Activated CD4-positive, alpha-beta T cell treated with anti-CD3 and anti-CD28 coated beads for 36 hours (primary cell): ENCODE measurements at regions of chr9 and their contacts with region 1.

Region 1: DNA sequence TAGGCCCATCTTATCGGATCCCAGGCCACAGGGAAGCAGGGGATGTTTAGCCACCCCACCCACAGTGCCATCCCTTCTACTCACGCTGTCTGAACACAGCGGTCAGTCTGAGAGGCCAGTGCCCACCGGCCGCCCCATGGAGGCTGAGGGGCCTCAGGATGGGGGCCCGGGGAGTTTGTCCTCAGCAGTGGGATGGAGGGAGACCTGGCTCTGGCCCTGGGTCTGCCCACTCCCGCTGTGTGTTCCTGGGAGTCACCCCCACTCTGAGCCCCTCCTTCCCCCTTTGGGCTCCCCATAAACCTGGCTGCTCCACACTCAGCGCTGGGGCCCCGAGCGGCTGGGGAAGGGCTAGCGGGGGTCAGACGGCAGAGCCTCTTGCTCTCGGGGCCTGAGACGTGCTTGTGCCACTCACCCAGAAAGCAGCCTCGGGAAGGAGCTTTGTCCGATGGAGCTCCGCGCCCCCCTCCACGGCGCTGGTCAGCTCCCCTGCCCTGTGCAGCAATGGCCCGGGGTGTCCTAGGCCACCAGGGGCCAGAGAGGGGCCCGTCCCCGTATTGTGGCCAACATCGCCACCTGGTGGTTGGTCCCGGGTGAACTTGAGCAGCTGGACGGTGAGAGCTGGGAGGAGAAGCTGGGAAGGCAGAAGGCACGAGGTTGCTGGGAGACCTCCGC is 10.9 kb upstream of the LAMC3 start:
- DNase-seq: peak; percentile 80
- ATAC-seq: peak; percentile 63
- H3K4me3 Mint-ChIP-seq: no peak overlapping the region
- H3K27ac Mint-ChIP-seq: no peak overlapping the region
- H3K4me1 Mint-ChIP-seq: no peaks in the 10 kb centered on the region
- H3K27me3 Mint-ChIP-seq: peaks cover 12% of the 10 kb centered on the region

Region 2: DNA sequence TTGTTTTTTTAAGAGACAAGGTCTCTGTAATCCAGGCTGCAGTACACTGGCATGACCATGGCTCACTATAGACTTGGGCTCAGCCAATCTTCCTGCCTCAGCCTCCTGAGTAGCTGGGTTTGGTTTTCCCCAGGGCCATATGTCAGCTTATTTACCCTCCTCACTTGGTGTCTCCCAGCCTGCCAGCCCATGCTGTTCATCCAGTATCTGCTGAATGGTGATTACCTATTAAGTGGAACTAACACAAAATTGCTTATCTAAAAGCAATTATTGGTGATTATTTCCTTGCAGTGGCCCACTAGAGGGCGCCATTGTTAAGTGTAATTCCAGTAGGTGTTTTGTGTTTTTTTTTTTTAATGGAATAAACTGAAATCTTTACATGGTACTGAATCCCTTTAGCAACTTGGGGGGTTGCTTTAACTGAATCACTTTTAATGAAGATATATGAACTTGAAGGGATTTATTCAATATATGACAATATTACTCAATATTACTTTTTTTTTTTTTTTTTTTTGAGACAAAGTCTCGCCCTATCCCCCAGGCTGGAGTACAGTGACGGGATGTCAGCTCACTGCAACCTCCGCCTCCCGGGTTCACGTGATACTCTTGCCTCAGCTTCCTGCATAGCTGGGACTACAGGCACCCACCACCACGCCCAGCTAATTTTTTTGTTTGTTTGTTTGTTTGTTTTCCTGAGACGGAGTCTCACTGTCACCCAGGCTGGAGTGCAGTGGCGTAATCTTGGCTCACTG is 290.7 kb before region 1 on chr9:
- CTCF ChIA-PET with region 1: interaction called, 3 read pairs
- POLR2A ChIA-PET with region 1: no interaction called
- intact Hi-C with region 1: loop called in 1 of 2 experiments (anchors 1 kb)
- DNase-seq: peak; percentile 82
- ATAC-seq: peak; percentile 33
- H3K4me3 Mint-ChIP-seq: no peak overlapping the region
- H3K27ac Mint-ChIP-seq: no peak overlapping the region
- H3K4me1 Mint-ChIP-seq: peaks cover 5% of the 10 kb centered on the region
- H3K27me3 Mint-ChIP-seq: no peaks in the 10 kb centered on the region

Region 3: GRCh38 chr9:131008909-131009618 is 11.0 kb after region 1 on chr9 and contains the start of gene LAMC3:
- CTCF ChIA-PET with region 1: interaction called, 10 read pairs
- POLR2A ChIA-PET with region 1: no interaction called
- intact Hi-C with region 1: no loop called
- DNase-seq: peak; percentile 39
- ATAC-seq: peak; percentile 55
- H3K4me3 Mint-ChIP-seq: peak within 1 kb of the TSS; percentile 53
- H3K27ac Mint-ChIP-seq: no peak within 1 kb of the TSS
- H3K4me1 Mint-ChIP-seq: no peaks in the 10 kb centered on the region
- H3K27me3 Mint-ChIP-seq: peaks cover 16% of the 10 kb centered on the region
- total RNA-seq, gene LAMC3: 0.40 to 0.59 TPM

Region 4: GRCh38 chr9:131310833-131311554 is 312.9 kb after region 1 on chr9:
- CTCF ChIA-PET with region 1: no interaction called
- POLR2A ChIA-PET with region 1: no interaction called
- intact Hi-C with region 1: no loop called
- DNase-seq: peak; percentile 86
- ATAC-seq: peak; percentile 97
- H3K4me3 Mint-ChIP-seq: peak overlapping the region; percentile 15
- H3K27ac Mint-ChIP-seq: peak overlapping the region; percentile 81
- H3K4me1 Mint-ChIP-seq: peaks cover 12% of the 10 kb centered on the region
- H3K27me3 Mint-ChIP-seq: no peaks in the 10 kb centered on the region

Region 5: DNA sequence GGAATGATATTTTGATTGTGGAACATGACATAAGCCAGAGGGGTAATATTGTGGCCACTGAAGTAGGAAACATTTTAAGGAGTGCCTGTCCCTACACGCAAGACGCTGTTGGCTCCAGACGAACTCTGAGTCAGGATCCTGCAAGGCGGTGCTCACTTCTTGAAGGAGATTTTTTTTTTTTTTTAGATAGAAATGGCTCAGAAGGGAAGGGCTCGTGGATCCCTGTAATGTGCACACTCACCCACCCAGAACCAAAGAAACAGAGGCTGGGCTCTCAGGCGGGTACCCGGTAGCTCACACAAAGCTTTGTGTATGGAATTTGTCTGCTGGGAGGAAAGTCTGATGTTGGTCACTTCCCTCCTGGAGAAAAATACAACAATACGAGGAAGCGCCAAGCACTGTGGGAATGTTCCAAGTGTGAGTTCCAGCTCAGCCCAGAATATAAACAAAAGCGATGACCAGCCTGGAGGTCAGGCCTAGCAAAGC is 716.1 kb after region 1 on chr9:
- CTCF ChIA-PET with region 1: no interaction called
- POLR2A ChIA-PET with region 1: no interaction called
- intact Hi-C with region 1: no loop called
- DNase-seq: no peak
- ATAC-seq: no peak
- H3K4me3 Mint-ChIP-seq: no peak overlapping the region
- H3K27ac Mint-ChIP-seq: no peak overlapping the region
- H3K4me1 Mint-ChIP-seq: peaks cover 75% of the 10 kb centered on the region
- H3K27me3 Mint-ChIP-seq: no peaks in the 10 kb centered on the region